Dorsolateral prefrontal cortex (tissue), 120 donors: ENCODE measurements at regions of chr2 and their contacts with region 1.

Region 1: DNA sequence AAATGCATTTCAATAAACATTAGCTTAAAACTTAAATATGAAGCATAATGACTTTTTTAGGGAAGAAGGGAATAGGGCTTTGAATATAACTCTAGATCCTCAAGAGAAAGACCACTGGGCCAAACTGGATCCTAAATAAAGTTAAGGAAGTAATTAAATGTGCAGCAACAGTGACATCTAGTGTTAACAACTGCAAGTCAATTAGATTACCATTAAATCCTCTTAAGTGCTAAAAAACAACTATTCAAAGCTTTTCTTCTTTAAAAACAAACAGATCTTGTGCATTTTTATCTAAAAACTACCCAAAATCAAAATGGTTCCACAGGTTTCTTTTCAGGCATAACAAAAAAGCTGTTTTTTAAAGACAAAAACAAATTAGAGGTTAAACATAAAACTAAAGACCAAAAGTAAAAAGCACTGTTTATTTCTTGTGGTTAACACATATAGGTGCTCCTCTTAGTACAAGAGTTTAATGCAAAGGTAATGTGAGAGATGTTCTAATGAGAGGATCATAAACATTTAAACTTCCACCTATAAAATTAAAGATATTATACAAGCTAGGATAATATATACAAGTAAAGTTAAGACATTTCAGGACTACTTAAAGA is 111.4 kb downstream of the THADA start:
- DNase-seq: no peak
- H3K4me3 ChIP-seq: no peak overlapping the region
- H3K27ac ChIP-seq: peak overlapping the region in 1 of 59 donors; percentile 29
- H3K27me3 ChIP-seq: no peaks in the 10 kb centered on the region
- CTCF ChIP-seq: peak; percentile 40 to 93 (median 74)

Region 2: GRCh38 chr2:42828487-42829425 is 655.7 kb before region 1 on chr2:
- intact Hi-C with region 1: loop called (anchors 2 to 10 kb)
- DNase-seq: peak; percentile 61 to 79 (median 70)
- H3K4me3 ChIP-seq: peak overlapping the region in 7 of 59 donors; percentile 19 to 64 (median 49)
- H3K27ac ChIP-seq: peak overlapping the region in 1 of 59 donors; percentile 18
- H3K27me3 ChIP-seq: no peaks in the 10 kb centered on the region
- CTCF ChIP-seq: peak; percentile 69 to 98 (median 93)

Region 3: GRCh38 chr2:42859006-42859552 is 625.3 kb before region 1 on chr2:
- intact Hi-C with region 1: loop called in 1 of 2 experiments (anchors 10 kb)
- DNase-seq: peak in 2 of 10 donors; percentile 18 to 46
- H3K4me3 ChIP-seq: no peak overlapping the region
- H3K27ac ChIP-seq: no peak overlapping the region
- H3K27me3 ChIP-seq: no peaks in the 10 kb centered on the region
- CTCF ChIP-seq: peak; percentile 58 to 84 (median 74)

Region 4: DNA sequence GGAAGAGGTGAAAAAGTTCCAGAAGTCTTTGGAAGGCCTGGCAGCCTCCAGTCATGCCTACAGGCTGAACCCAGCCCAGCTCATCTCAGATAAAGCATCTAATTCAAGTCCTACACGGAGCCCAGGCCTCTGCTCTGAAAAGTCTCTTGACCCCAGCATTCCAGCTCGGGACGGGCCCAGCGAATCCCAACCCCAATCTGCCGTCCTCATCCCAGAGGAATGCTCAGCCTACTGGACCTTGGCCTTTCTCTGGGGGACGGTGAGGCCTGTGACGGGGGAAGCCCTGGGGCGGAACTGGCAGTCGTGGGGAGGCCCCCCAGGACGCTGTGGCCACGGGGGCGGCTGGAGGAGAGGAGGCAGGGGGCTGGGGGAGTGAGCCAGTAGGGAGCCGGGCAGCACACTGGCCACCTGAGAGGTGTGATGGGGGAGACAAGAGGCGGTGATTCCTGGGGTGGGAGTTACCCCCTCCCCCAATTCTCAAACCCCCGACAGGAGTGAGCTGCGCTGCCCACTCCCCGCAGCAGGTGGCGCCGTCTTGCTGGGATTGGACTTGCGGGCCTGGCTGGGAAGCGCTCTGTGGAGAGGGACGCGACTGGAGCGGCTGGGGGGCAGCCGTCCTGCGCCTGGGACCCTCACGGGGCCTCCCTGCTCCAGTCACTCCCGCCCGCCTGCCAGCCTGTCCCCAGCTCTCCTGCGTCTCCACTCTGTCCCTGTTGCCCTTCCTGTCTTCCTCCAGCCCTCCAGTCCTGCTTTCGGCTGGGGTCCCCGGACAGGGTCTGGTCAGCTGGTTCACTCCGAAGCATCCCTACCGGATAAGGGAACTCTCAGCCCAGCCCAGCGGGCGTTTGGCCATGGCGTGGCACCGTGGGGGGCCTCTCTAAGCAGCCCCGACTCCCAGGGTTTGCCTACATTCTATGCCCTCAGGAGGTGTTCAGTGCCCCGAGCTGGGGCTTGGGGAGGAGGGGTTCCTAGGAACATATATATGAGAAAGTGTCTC is 509.4 kb before region 1 on chr2:
- intact Hi-C with region 1: loop called in 1 of 2 experiments (anchors 10 kb)
- DNase-seq: peak; percentile 35 to 85 (median 73)
- H3K4me3 ChIP-seq: peak overlapping the region in 58 of 59 donors; percentile 12 to 67 (median 49)
- H3K27ac ChIP-seq: peak overlapping the region in 46 of 59 donors; percentile 7 to 90 (median 66)
- H3K27me3 ChIP-seq: no peaks in the 10 kb centered on the region
- CTCF ChIP-seq: peak; percentile 63 to 97 (median 89)

Region 5: DNA sequence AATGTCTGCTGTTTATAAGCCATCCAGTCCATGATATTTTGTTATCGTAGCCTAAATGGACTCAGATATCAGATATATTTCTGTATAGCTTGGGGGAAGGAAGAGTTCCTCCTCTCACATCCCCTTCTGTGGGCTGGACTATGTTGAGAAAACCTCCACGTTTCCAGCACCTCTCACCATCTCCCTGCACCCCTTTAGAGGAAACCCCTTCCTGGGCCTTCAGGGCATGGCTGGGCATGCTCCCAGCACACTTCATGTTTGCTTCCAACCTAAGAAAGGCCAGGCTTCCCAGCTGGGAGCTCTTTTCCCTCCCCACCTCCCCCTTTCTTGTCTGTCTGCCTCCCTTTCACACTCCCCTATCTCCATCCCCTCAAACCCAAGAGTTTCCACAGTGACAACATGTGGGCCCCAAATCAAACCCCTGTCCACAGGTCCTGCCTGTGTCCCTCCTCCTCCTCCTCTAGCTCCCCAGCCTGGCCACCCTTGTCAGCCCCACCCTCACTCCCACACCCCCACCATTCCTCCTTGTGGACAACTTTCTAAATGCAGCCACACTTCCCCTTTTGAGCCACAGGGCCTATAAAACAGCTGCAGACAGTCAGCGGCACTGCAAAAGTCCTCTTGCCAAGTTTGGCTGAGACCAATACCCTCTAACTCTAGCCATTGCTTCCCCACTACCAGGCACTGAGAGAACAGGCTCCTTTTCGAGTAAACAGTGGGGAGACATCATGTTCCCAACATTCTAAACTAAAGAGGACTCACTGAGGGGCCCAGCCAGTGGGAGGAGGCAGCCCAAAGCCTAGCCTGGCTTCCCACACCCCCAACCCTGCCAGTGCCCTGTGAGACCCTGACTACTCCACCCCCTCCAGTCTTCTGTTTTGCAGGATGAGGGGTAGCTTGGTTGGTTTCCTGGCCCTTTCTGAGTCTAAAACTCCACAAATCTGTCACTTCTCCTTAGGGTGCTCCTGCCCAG is 378.6 kb before region 1 on chr2:
- intact Hi-C with region 1: loop called in 1 of 2 experiments (anchors 10 kb)
- DNase-seq: no peak
- H3K4me3 ChIP-seq: no peak overlapping the region
- H3K27ac ChIP-seq: peak overlapping the region in 51 of 59 donors; percentile 3 to 85 (median 64)
- H3K27me3 ChIP-seq: no peaks in the 10 kb centered on the region
- CTCF ChIP-seq: peak in 1 of 56 donors; percentile 16